AG04449 (cell line): ENCODE measurements at regions of chr7 and their contacts with region 1.

Region 1: GRCh38 chr7:25098096-25099046 is 26.7 kb downstream of the CYCS start:
- DNase-seq: no peak
- H3K4me3 ChIP-seq: no peak overlapping the region
- CTCF ChIP-seq: peak; percentile 85

Region 2: GRCh38 chr7:24572997-24573625 is 525.3 kb before region 1 on chr7 and contains the start of gene PALS2:
- CTCF ChIA-PET with region 1: interaction called, 22 read pairs
- POLR2A ChIA-PET with region 1: no interaction called
- DNase-seq: no peak
- H3K4me3 ChIP-seq: peak within 1 kb of the TSS; percentile 75
- CTCF ChIP-seq: no peak

Region 3: GRCh38 chr7:24722386-24723177 is 375.8 kb before region 1 on chr7:
- CTCF ChIA-PET with region 1: interaction called, 18 read pairs
- POLR2A ChIA-PET with region 1: no interaction called
- DNase-seq: no peak
- H3K4me3 ChIP-seq: no peak overlapping the region
- CTCF ChIP-seq: peak; percentile 45

Region 4: DNA sequence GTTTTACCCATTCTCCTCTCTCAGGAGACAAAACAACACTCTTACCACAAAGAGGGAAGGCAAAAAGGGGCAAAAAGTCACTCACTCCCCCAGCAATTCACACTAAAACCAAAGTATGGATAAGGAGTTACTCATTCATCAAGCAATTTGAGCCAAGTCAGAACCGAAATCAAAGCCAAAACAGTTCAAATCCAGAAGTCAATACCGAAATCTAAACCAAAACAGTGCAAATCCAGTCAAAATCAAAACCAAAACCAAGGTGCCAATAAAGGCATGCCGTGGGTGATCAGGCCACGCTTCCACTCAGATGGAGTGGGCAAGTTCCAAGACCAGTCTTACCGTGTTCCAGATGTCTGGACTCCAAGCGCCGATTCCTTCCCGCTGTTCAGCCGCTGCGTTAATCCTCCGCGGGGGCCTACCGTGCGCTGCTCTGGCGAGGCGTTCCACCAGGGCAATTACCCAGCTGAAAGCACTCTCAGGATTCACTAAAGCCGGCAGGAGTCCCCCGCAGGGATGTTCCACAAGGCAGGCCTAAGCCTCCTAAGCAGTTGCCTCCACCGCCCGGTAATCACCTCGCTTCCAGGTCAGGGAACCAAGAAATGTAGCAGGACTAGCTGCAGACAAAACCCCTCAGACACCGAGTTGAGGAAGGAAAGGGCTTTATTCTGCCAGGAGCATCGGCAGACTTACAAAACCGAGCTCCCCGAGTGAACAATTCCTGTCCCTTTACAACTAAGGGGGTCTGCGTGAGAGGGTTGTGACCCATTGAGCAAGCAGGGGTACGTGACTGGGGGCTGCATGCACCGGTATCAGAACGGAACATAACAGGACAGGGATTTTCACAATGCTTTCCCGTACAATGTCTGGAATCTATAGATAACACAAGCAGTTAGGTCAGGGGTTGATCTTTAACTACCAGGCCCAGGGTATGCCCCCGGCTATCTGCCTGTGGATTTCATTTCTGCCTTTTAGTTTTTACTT is 303.3 kb before region 1 on chr7:
- CTCF ChIA-PET with region 1: interaction called, 52 read pairs
- POLR2A ChIA-PET with region 1: no interaction called
- DNase-seq: no peak
- H3K4me3 ChIP-seq: no peak overlapping the region
- CTCF ChIP-seq: no peak

Region 5: DNA sequence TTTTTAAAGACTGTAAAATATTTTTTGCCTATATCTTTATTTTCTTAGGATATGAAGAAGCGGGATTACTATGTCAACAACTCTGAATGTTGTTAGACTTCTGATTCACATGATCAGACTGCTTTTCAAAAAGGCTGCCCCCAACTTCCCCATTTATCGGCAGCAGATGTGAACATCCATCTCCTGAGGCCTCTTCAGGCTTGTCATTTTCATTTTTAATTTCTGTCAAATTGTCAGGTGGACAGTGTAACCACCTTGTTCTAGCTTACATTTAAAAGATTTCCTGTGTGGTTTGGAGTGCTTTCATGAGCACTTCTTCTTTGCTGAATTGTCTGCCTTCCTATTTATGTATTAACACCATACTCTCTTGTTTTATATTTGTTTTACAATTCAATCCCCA is 262.3 kb before region 1 on chr7:
- CTCF ChIA-PET with region 1: interaction called, 68 read pairs
- POLR2A ChIA-PET with region 1: no interaction called
- DNase-seq: no peak
- H3K4me3 ChIP-seq: no peak overlapping the region
- CTCF ChIP-seq: no peak

Region 6: GRCh38 chr7:24979863-24980533 is 118.4 kb before region 1 on chr7 and contains the start of gene OSBPL3:
- CTCF ChIA-PET with region 1: interaction called, 105 read pairs
- POLR2A ChIA-PET with region 1: interaction called, 3 read pairs
- DNase-seq: peak; percentile 66
- H3K4me3 ChIP-seq: peak within 1 kb of the TSS; percentile 76
- CTCF ChIP-seq: no peak

Region 7: GRCh38 chr7:25109276-25109675 is 10.9 kb after region 1 on chr7:
- CTCF ChIA-PET with region 1: interaction called, 35 read pairs
- POLR2A ChIA-PET with region 1: no interaction called
- DNase-seq: no peak
- H3K4me3 ChIP-seq: no peak overlapping the region
- CTCF ChIP-seq: no peak